Tibial artery (tissue), 4 donors: ENCODE measurements at regions of chr16 and their contacts with region 1.

Region 1: GRCh38 chr16:23924128-23924527 is 88.3 kb downstream of the PRKCB start:
- DNase-seq: no peak
- H3K4me3 ChIP-seq: no peak overlapping the region
- H3K27ac ChIP-seq: no peak overlapping the region
- H3K4me1 ChIP-seq: no peaks in the 10 kb centered on the region
- H3K27me3 ChIP-seq: no peaks in the 10 kb centered on the region
- CTCF ChIP-seq: no peak

Region 2: GRCh38 chr16:23959072-23959751 is 35.1 kb after region 1 on chr16:
- intact Hi-C with region 1: no loop called
- DNase-seq: no peak
- H3K4me3 ChIP-seq: no peak overlapping the region
- H3K27ac ChIP-seq: no peak overlapping the region
- H3K4me1 ChIP-seq: no peaks in the 10 kb centered on the region
- H3K27me3 ChIP-seq: no peaks in the 10 kb centered on the region
- CTCF ChIP-seq: no peak

Region 3: GRCh38 chr16:23987443-23987842 is 63.3 kb after region 1 on chr16:
- intact Hi-C with region 1: loop called (anchors 10 kb)
- DNase-seq: no peak
- H3K4me3 ChIP-seq: no peak overlapping the region
- H3K27ac ChIP-seq: no peak overlapping the region
- H3K4me1 ChIP-seq: no peaks in the 10 kb centered on the region
- H3K27me3 ChIP-seq: no peaks in the 10 kb centered on the region
- CTCF ChIP-seq: no peak